Activated naive CD8-positive, alpha-beta T cell treated with anti-CD3 and anti-CD28 coated beads, Interleukin-2, amount 10 ng/mL, durations not matched to agents 7 days and 5 days (primary cell): ENCODE measurements at regions of chr11 and their contacts with region 1.

Region 1: GRCh38 chr11:35145271-35145670 is 6.3 kb downstream of the CD44 start:
- DNase-seq: no peak
- ATAC-seq: no peak
- H3K4me3 Mint-ChIP-seq: peak overlapping the region; percentile 80
- H3K27ac Mint-ChIP-seq: peak overlapping the region; percentile 90
- H3K4me1 Mint-ChIP-seq: peaks cover 79% of the 10 kb centered on the region
- H3K27me3 Mint-ChIP-seq: no peaks in the 10 kb centered on the region

Region 2: DNA sequence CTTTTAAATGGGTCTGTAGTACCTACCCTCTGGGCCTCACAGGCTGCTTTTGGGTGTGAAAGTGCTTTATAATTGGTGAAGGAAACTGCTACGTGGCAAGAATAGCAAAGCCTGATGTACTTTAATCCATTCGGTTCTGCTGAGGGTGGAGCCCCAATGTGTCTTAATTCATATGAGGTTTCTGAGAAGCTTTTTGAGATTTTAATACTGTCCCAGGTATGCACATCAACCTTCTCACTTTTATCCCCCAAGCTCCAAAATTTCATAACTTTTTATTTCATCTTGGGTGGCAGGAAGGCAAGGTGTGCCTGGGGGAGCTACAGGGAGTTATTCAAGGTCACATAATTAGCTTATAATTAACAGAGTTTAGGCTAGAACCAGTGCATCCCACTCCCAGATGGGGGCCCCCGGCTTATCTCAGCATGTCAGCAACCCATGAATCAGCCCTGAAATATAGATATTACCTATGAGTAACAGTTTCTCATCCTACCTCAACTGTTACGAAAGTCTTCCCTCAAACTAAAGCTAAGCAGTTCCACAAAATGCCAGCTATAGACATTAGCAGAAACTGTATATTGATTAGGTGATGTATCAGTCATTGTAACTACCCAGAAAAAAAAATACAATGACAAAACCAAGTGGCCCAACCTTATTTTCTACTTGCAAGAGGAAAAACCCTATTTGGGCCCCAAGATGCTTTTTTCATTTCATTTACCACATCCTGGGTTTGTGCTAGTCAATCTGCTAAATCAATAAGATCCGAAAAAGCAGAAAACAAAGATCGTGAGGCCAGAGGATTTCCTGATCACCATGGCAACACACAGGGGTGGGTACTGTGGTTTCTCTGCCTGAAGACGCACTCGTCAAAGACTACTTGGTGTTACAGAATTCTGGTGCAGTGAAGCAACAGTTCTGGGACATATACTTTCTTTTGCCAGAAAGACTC is 20.4 kb after region 1 on chr11:
- POLR2A ChIA-PET with region 1: interaction called, 87 read pairs
- DNase-seq: peak; percentile 79
- ATAC-seq: peak; percentile 68
- H3K4me3 Mint-ChIP-seq: peak overlapping the region; percentile 81
- H3K27ac Mint-ChIP-seq: peak overlapping the region; percentile 97
- H3K4me1 Mint-ChIP-seq: peaks cover 88% of the 10 kb centered on the region
- H3K27me3 Mint-ChIP-seq: no peaks in the 10 kb centered on the region

Region 3: GRCh38 chr11:35173011-35173511 is 27.8 kb after region 1 on chr11:
- POLR2A ChIA-PET with region 1: interaction called, 87 read pairs
- DNase-seq: no peak
- ATAC-seq: no peak
- H3K4me3 Mint-ChIP-seq: peak overlapping the region; percentile 75
- H3K27ac Mint-ChIP-seq: peak overlapping the region; percentile 94
- H3K4me1 Mint-ChIP-seq: peaks cover 82% of the 10 kb centered on the region
- H3K27me3 Mint-ChIP-seq: no peaks in the 10 kb centered on the region

Region 4: DNA sequence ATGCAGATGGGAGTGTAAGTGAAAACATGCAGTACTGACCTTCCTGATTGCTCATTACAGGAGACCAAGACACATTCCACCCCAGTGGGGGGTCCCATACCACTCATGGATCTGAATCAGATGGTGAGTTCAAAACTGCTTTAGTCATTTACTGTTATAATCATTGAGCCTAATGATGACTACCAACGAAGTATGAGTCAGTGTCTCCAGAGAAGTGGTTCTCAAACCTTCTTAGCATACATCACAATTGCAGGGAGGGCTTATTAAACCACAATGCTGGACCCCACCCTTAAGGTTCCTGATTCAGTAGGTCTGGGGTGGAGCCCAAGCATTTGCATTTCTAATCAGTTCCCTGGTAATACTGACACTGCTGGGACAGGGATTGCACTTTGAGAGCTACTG is 69.5 kb after region 1 on chr11:
- POLR2A ChIA-PET with region 1: no interaction called
- DNase-seq: no peak
- ATAC-seq: no peak
- H3K4me3 Mint-ChIP-seq: no peak overlapping the region
- H3K27ac Mint-ChIP-seq: no peak overlapping the region
- H3K4me1 Mint-ChIP-seq: peaks cover 37% of the 10 kb centered on the region
- H3K27me3 Mint-ChIP-seq: no peaks in the 10 kb centered on the region